GM12878 (cell line): ENCODE measurements at regions of chr20 and their contacts with region 1.

Region 1: GRCh38 chr20:18005231-18006109 is 36.7 kb downstream of the MGME1 start:
- DNase-seq: peak; percentile 66
- ATAC-seq: peak; percentile 97
- H3K4me3 ChIP-seq: no peak overlapping the region
- H3K27ac ChIP-seq: peak overlapping the region; percentile 82
- H3K4me1 ChIP-seq: peaks cover 31% of the 10 kb centered on the region
- H3K27me3 ChIP-seq: no peaks in the 10 kb centered on the region
- CTCF ChIP-seq: no peak
- EP300 ChIP-seq: peak; percentile 78 to 88
- POLR2A ChIP-seq: peak; percentile 60
- RAD21 ChIP-seq: no peak

Region 2: GRCh38 chr20:17958373-17959256 is 46.9 kb before region 1 on chr20:
- CTCF ChIA-PET with region 1: interaction called, 7 read pairs
- POLR2A ChIA-PET with region 1: interaction called, 6 read pairs
- RAD21 ChIA-PET with region 1: interaction called, 10 read pairs
- SMC1A ChIA-PET with region 1: interaction called, 11 read pairs
- in situ Hi-C with region 1: no loop called
- intact Hi-C with region 1: no loop called
- DNase-seq: no peak
- ATAC-seq: peak; percentile 2; the same call in 2 of the 3 replicates
- H3K4me3 ChIP-seq: peak overlapping the region; percentile 86; the same call in 1 of the 2 replicates
- H3K27ac ChIP-seq: peak overlapping the region; percentile 54
- H3K4me1 ChIP-seq: peaks cover 48% of the 10 kb centered on the region
- H3K27me3 ChIP-seq: no peaks in the 10 kb centered on the region
- CTCF ChIP-seq: no peak
- EP300 ChIP-seq: no peak
- POLR2A ChIP-seq: no peak
- RAD21 ChIP-seq: no peak

Region 3: GRCh38 chr20:18019070-18019469 is 13.6 kb after region 1 on chr20:
- CTCF ChIA-PET with region 1: interaction called, 8 read pairs
- POLR2A ChIA-PET with region 1: no interaction called
- RAD21 ChIA-PET with region 1: interaction called, 9 read pairs
- SMC1A ChIA-PET with region 1: interaction called, 29 read pairs
- in situ Hi-C with region 1: no loop called
- intact Hi-C with region 1: no loop called
- DNase-seq: no peak
- ATAC-seq: peak; percentile 95
- H3K4me3 ChIP-seq: no peak overlapping the region
- H3K27ac ChIP-seq: no peak overlapping the region
- H3K4me1 ChIP-seq: no peaks in the 10 kb centered on the region
- H3K27me3 ChIP-seq: no peaks in the 10 kb centered on the region
- CTCF ChIP-seq: peak; percentile 64 to 81 (median 70); a peak in 5 of 6 replicates
- EP300 ChIP-seq: no peak
- POLR2A ChIP-seq: no peak
- RAD21 ChIP-seq: peak; percentile 71

Region 4: DNA sequence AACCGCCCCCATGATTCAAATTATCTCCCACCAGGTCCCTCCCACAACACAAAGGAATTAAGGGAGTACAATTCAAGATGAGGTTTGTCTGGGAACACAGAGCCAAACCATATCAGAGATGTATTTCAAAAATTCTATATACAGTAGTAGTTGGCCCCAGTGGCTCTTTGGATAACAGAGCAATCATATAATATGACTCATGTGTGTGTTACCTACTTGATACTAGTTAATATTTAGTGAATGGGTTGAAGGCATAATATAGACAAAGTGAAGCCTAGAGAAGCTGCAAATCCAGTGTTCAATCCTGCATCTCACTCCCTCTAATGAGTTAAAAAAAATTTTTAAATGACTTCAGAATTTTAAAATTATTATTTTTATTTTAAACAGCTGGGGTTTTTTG is 175.3 kb after region 1 on chr20:
- CTCF ChIA-PET with region 1: no interaction called
- POLR2A ChIA-PET with region 1: no interaction called
- RAD21 ChIA-PET with region 1: no interaction called
- SMC1A ChIA-PET with region 1: no interaction called
- in situ Hi-C with region 1: no loop called
- intact Hi-C with region 1: no loop called
- DNase-seq: no peak
- ATAC-seq: no peak
- H3K4me3 ChIP-seq: no peak overlapping the region
- H3K27ac ChIP-seq: no peak overlapping the region
- H3K4me1 ChIP-seq: no peaks in the 10 kb centered on the region
- H3K27me3 ChIP-seq: no peaks in the 10 kb centered on the region
- CTCF ChIP-seq: no peak
- EP300 ChIP-seq: no peak
- POLR2A ChIP-seq: no peak
- RAD21 ChIP-seq: no peak

Region 5: GRCh38 chr20:18287915-18288748 is 282.7 kb after region 1 on chr20 and contains the start of gene ZNF133:
- CTCF ChIA-PET with region 1: no interaction called
- POLR2A ChIA-PET with region 1: no interaction called
- RAD21 ChIA-PET with region 1: no interaction called
- SMC1A ChIA-PET with region 1: no interaction called
- in situ Hi-C with region 1: no loop called
- intact Hi-C with region 1: loop called (anchors 10 kb)
- DNase-seq: peak; percentile 78
- ATAC-seq: peak; percentile 100
- H3K4me3 ChIP-seq: peak within 1 kb of the TSS; percentile 92
- H3K27ac ChIP-seq: peak within 1 kb of the TSS; percentile 94
- H3K4me1 ChIP-seq: peaks cover 11% of the 10 kb centered on the region
- H3K27me3 ChIP-seq: no peaks in the 10 kb centered on the region
- CTCF ChIP-seq: peak in 2 of 3 experiments; percentile 13 to 14; a peak in 2 of 6 replicates
- EP300 ChIP-seq: no peak
- POLR2A ChIP-seq: peak; percentile 97
- RAD21 ChIP-seq: no peak
- polyA plus RNA-seq, gene ZNF133: 2.0 to 2.2 TPM